Endothelial cell of umbilical vein (primary cell): ENCODE measurements at regions of chr16 and their contacts with region 1.

Region 1: DNA sequence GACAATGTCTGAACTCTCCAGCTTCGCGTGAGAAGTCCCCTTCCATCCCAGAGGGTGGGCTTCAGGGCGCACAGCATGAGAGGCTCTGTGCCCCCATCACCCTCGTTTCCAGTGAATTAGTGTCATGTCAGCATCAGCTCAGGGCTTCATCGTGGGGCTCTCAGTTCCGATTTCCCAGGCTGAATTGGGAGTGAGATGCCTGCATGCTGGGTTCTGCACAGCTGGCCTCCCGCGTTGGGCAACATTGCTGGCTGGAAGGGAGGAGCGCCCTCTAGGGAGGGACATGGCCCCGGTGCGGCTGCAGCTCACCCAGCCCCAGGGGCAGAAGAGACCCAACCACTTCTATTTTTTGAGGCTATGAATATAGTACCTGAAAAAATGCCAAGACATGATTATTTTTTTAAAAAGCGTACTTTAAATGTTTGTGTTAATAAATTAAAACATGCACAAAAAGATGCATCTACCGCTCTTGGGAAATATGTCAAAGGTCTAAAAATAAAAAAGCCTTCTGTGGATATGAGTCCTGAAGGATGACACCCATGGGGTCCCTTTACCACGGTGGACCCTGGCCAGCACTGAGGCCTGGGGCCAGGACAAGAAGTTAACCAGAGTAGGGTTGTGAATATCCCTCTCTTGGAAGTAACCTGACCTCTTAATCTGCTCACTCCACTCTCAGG is 10.5 kb upstream of the ITGAD start:
- DNase-seq: peak; percentile 35
- H3K4me3 ChIP-seq: no peak overlapping the region
- H3K27ac ChIP-seq: no peak overlapping the region
- H3K4me1 ChIP-seq: no peaks in the 10 kb centered on the region
- H3K27me3 ChIP-seq: no peaks in the 10 kb centered on the region
- CTCF ChIP-seq: peak; percentile 54 to 80
- POLR2A ChIP-seq: no peak

Region 2: GRCh38 chr16:31202414-31203375 is 179.9 kb before region 1 on chr16 and contains the start of gene PYCARD:
- CTCF ChIA-PET with region 1: interaction called, 20 read pairs
- POLR2A ChIA-PET with region 1: no interaction called
- dilution Hi-C with region 1: no loop called
- intact Hi-C with region 1: loop called (anchors 2 kb)
- DNase-seq: peak; percentile 36
- H3K4me3 ChIP-seq: peak within 1 kb of the TSS; percentile 26 to 62 (median 36)
- H3K27ac ChIP-seq: no peak within 1 kb of the TSS
- H3K4me1 ChIP-seq: peaks cover 4% of the 10 kb centered on the region
- H3K27me3 ChIP-seq: peaks cover 2 to 6% of the 10 kb centered on the region in 2 experiments
- CTCF ChIP-seq: no peak
- POLR2A ChIP-seq: no peak
- total RNA-seq, gene PYCARD: 19.1 and 23.0 TPM in 2 replicates

Region 3: DNA sequence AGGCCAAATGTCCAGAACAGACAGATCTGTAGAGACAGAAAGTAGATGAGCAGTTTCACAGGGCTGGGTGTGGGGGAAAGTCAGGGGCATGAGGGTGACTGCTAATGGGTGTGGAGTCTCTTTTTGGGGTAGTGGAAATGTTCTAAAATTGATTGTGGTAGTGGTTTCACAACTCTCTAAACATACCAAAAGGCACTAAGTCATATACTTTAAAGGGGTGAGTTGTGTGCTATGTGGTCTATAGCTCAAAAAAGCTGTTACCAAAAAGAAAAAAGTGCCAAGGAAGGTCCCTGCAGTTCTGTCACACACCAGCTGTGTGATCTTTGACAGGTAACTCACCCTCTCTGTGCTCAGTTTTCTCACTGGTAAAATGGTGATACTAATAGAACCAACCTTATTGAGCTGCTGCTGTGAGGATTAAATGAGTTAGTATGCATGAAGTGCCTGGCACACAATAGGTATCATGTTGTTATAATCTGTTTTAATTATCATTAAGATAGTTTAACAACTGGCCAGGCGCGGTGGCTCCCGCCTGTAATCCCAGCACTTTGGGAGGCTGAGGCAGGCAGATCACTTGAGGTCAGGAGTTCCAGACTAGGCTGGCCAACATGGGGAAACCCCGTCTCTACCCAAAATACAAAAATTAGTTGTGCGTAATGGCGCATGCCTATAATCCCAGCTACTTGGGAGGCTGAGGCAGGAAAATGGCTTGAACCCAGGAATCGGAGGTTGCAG is 17.3 kb before region 1 on chr16:
- CTCF ChIA-PET with region 1: interaction called, 12 read pairs
- POLR2A ChIA-PET with region 1: no interaction called
- dilution Hi-C with region 1: no loop called
- intact Hi-C with region 1: no loop called
- DNase-seq: no peak
- H3K4me3 ChIP-seq: no peak overlapping the region
- H3K27ac ChIP-seq: no peak overlapping the region
- H3K4me1 ChIP-seq: no peaks in the 10 kb centered on the region
- H3K27me3 ChIP-seq: no peaks in the 10 kb centered on the region
- CTCF ChIP-seq: no peak
- POLR2A ChIP-seq: no peak

Region 4: DNA sequence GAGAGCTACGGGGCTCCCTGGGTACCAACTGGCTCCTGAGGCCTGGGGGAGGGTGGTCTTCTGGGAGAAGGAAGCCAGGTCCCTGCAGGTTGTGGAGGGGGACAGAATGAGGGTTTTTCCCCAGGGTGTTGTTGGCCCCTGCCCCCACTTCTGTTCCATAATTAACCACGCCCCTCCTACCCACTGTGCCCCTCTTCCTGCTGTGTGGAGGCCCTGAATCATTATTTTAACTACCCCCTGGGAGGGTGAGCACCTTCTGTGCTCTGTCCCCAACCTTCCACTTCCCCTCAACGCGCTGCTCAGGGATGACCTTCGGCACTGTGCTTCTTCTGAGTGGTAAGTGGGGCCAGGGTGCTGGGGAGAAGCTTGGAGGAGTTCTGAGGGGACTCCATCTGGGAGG is 10.4 kb after region 1 on chr16 and contains the start of gene ITGAD:
- CTCF ChIA-PET with region 1: interaction called, 10 read pairs
- POLR2A ChIA-PET with region 1: no interaction called
- dilution Hi-C with region 1: no loop called
- intact Hi-C with region 1: no loop called
- DNase-seq: no peak
- H3K4me3 ChIP-seq: no peak within 1 kb of the TSS
- H3K27ac ChIP-seq: no peak within 1 kb of the TSS
- H3K4me1 ChIP-seq: no peaks in the 10 kb centered on the region
- H3K27me3 ChIP-seq: no peaks in the 10 kb centered on the region
- CTCF ChIP-seq: no peak
- POLR2A ChIP-seq: no peak
- total RNA-seq, gene ITGAD: not detected in 2 replicates

Region 5: DNA sequence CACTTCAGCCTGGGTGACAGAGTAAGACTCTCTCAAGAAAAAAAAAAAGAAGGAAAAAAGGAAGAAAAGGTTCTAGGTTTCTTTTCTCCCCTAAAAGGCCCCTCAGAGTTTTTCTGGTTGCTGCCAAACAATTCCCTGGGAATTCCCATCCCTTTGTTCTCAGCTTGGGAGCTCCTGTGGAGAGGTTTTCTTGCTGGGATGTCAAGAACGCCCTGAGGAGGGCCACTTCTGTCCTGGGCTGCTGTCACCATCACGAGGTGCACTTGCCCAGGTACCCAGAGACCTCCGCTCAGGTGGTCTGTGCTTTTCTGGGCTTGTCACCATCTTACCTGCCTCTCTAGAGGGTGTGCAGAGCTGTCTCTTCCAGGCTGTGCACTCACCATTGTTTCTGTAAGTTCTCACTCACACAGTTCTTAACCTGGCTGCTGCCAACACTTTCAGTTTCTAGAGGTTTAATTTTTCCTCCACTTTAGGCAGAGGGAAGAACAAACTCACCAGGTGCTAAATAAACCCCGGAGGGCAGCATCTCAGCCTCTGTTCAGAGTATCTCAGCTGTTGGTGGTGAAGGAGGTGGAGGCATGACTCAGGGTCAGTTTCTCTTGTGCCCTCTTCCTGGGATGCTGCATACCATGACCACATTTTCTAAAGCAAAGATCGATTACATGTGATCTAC is 47.9 kb after region 1 on chr16:
- CTCF ChIA-PET with region 1: interaction called, 14 read pairs
- POLR2A ChIA-PET with region 1: no interaction called
- dilution Hi-C with region 1: no loop called
- intact Hi-C with region 1: no loop called
- DNase-seq: no peak
- H3K4me3 ChIP-seq: no peak overlapping the region
- H3K27ac ChIP-seq: no peak overlapping the region
- H3K4me1 ChIP-seq: no peaks in the 10 kb centered on the region
- H3K27me3 ChIP-seq: peaks cover 4 to 6% of the 10 kb centered on the region in 2 experiments
- CTCF ChIP-seq: no peak
- POLR2A ChIP-seq: no peak